ENCODE measurements at regions of chrX and their contacts with region 1.

Region 1: GRCh38 chrX:6708046-6708445 is 173.1 kb upstream of the VCX3A start:
- DNase-seq: peak; percentile 22 to 73
- H3K4me3 ChIP-seq: no peak overlapping the region
- H3K27ac ChIP-seq: peak overlapping the region; percentile 31
- H3K4me1 ChIP-seq: peaks cover 22% of the 10 kb centered on the region
- H3K27me3 ChIP-seq: no peaks in the 10 kb centered on the region
- CTCF ChIP-seq: no peak

Region 2: GRCh38 chrX:6660567-6661264 is 47.3 kb before region 1 on chrX:
- CTCF ChIA-PET with region 1: no interaction called
- POLR2A ChIA-PET with region 1: no interaction called
- intact Hi-C with region 1: loop called (anchors 1 kb)
- DNase-seq: peak; percentile 47 to 81
- H3K4me3 ChIP-seq: peak overlapping the region; percentile 16; the same call in 1 of the 2 replicates
- H3K27ac ChIP-seq: peak overlapping the region; percentile 89
- H3K4me1 ChIP-seq: peaks cover 25% of the 10 kb centered on the region
- H3K27me3 ChIP-seq: no peaks in the 10 kb centered on the region
- CTCF ChIP-seq: no peak

Region 3: GRCh38 chrX:6694977-6695376 is 13.1 kb before region 1 on chrX:
- CTCF ChIA-PET with region 1: no interaction called
- POLR2A ChIA-PET with region 1: interaction called, 12 read pairs
- intact Hi-C with region 1: no loop called
- DNase-seq: no peak
- H3K4me3 ChIP-seq: no peak overlapping the region
- H3K27ac ChIP-seq: no peak overlapping the region
- H3K4me1 ChIP-seq: no peaks in the 10 kb centered on the region
- H3K27me3 ChIP-seq: no peaks in the 10 kb centered on the region
- CTCF ChIP-seq: no peak

Region 4: GRCh38 chrX:7110821-7111276 is 402.8 kb after region 1 on chrX:
- CTCF ChIA-PET with region 1: no interaction called
- POLR2A ChIA-PET with region 1: interaction called, 10 read pairs
- intact Hi-C with region 1: no loop called
- DNase-seq: peak in 1 of 2 experiments; percentile 74
- H3K4me3 ChIP-seq: no peak overlapping the region
- H3K27ac ChIP-seq: peak overlapping the region; percentile 51
- H3K4me1 ChIP-seq: peaks cover 26% of the 10 kb centered on the region
- H3K27me3 ChIP-seq: no peaks in the 10 kb centered on the region
- CTCF ChIP-seq: no peak